Activated CD4-positive, alpha-beta T cell treated with anti-CD3 and anti-CD28 coated beads for 36 hours (primary cell): ENCODE measurements at regions of chr2 and their contacts with region 1.

Region 1: DNA sequence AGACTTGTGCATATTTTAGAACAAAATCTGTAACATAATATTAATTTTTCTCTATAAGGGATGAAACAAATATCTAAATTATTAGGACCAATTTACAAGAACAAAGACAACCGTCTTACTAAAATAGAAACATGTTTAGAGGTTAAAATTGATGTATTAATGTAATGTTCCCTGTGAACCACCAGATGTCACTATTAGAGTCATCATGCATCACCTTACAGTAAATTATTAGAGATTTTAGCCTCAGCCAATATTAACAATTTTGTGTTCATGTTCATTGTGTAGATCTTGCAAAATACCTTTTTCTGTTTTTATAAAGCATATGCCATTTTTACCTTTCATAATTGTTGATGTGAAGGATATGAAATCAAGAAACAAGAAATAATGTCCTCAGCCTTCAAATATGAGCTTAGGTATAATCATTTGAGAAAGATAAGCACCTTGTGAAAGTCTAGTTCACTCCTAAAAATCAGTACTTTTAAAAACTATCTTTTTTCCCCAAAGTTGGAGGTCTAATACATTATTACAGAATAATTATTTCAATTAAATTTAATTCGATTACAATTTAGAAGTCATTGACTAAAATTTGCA is 344.3 kb upstream of the KCNH7 start:
- DNase-seq: no peak
- ATAC-seq: no peak
- H3K4me3 Mint-ChIP-seq: no peak overlapping the region
- H3K27ac Mint-ChIP-seq: no peak overlapping the region
- H3K4me1 Mint-ChIP-seq: no peaks in the 10 kb centered on the region
- H3K27me3 Mint-ChIP-seq: no peaks in the 10 kb centered on the region

Region 2: GRCh38 chr2:162244541-162245031 is 938.3 kb before region 1 on chr2:
- CTCF ChIA-PET with region 1: no interaction called
- POLR2A ChIA-PET with region 1: no interaction called
- intact Hi-C with region 1: no loop called
- DNase-seq: no peak
- ATAC-seq: no peak
- H3K4me3 Mint-ChIP-seq: no peak overlapping the region
- H3K27ac Mint-ChIP-seq: no peak overlapping the region
- H3K4me1 Mint-ChIP-seq: no peaks in the 10 kb centered on the region
- H3K27me3 Mint-ChIP-seq: peaks cover 24% of the 10 kb centered on the region

Region 3: DNA sequence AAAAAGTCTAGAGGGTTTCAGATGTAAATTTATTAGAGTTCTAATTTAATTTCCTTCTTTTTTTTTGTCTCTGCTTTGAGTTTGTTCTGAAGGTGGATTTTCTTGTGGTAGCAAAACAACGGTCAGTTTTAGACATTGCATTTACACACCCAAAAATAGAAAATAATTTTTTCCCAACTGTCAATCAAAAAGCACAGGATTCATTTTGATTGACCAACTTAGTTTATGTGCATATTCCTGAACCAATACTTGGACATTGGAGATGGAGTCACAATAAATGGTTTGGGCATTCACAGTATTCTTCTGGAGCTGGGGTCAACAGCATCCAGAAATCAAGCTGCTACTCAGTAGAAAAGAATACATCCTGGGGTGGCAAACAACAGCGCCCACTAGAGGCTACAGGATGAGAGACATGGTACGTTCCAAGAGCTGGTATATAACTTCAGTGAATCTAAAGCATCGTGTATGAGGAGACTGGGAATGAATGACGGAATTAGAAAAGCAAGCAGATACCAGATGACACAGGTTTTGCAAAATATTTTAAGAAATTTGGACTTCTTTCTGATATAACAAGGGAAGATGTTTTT is 695.8 kb after region 1 on chr2:
- CTCF ChIA-PET with region 1: no interaction called
- POLR2A ChIA-PET with region 1: no interaction called
- intact Hi-C with region 1: loop called in 1 of 2 experiments (anchors 10 kb)
- DNase-seq: peak; percentile 27
- ATAC-seq: no peak
- H3K4me3 Mint-ChIP-seq: no peak overlapping the region
- H3K27ac Mint-ChIP-seq: no peak overlapping the region
- H3K4me1 Mint-ChIP-seq: no peaks in the 10 kb centered on the region
- H3K27me3 Mint-ChIP-seq: peaks cover 2% of the 10 kb centered on the region

Region 4: DNA sequence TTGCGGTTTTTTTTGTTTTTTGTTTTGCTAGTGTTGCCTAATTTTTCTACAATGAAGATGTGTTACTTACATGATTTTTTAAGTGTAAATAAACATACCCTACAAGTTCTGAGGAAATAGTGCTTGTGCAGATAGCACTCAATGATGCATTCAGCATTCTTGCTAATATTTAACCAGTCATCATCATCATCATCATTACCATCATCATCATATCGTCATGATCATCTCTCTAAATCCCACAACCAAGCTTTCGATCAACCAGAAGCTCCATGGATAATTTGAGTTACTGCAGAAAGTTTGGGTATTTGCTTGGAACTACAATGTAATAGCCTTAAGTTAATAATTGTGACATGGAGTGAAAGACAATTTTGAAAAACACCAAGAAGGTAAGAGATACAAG is 1297.7 kb after region 1 on chr2:
- CTCF ChIA-PET with region 1: no interaction called
- POLR2A ChIA-PET with region 1: no interaction called
- intact Hi-C with region 1: loop called in 1 of 2 experiments (anchors 5 kb)
- DNase-seq: no peak
- ATAC-seq: no peak
- H3K4me3 Mint-ChIP-seq: no peak overlapping the region
- H3K27ac Mint-ChIP-seq: no peak overlapping the region
- H3K4me1 Mint-ChIP-seq: no peaks in the 10 kb centered on the region
- H3K27me3 Mint-ChIP-seq: peaks cover 2% of the 10 kb centered on the region